Right ventricle myocardium inferior (tissue), 1 donor: ENCODE measurements at regions of chr14 and their contacts with region 1.

Region 1: GRCh38 chr14:67583711-67584644 is 16.1 kb downstream of the PIGH start:
- DNase-seq: no peak
- ATAC-seq: peak; percentile 58

Region 2: DNA sequence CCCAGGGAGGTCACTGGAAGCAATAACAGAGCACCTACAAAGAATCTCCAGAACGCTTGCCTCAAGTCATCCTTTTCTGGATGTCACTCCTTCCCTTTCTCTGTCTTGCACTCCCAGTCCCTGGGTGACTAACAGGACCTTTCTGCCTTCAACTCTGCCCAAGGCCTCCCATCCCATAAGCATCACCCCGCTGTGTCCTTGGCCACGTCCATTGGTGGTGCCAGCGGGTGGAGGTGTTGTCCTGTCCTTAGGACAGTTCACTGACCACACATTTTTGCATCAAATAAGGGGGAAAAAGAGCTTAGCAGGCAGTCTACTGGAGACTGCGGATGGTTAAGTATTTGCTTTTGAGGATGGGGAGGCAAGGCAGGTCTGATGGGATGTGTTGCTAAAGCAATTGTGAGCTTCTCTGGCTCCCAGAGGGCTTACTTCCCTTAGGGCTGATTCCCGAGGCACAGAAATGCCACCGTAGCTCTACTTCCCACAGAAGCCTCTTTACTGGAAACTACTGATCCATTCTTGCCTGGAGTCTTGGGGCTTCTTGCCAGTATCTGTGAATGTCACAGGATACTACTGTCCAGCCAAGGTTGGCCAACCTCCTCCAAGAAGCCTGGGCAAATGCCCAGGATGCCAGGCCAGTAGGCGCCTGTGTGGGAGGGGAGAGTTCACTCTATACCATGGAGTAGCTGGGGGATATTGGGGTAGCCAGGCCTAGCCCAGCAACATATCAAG is 148.2 kb before region 1 on chr14:
- intact Hi-C with region 1: no loop called
- DNase-seq: no peak
- ATAC-seq: peak; percentile 44

Region 3: DNA sequence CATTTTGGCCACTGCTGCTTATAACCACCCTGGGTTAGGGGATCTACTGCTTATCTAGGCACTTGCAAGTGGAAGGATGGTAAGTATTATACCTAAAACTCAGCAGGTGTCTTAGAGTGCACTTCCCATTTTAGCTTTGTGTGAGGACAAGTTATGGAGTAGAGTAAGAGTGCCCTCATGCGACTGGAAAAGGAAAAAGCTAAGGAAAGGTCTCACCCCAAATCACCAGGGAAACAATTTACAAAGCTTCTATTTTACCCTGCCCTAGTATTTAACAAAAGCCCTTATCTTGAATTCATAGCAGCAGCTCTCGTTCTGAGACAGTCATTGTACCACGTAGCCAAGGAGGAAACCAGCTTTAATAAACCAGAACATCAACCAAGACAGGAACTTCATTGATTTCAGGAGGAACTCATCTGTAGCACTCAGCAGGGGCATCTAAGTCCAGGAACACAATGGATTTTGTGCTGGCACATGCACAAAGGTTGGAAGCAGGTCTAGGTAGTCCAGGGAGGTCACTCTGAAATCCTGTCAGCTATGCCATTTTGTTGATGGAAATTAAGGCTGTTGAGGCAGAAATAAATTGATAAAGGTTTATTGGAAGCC is 120.6 kb after region 1 on chr14:
- intact Hi-C with region 1: loop called (anchors 2 kb)
- DNase-seq: no peak
- ATAC-seq: peak; percentile 54